Heart right ventricle (tissue), 16 donors: ENCODE measurements at regions of chr7 and their contacts with region 1.

Region 1: DNA sequence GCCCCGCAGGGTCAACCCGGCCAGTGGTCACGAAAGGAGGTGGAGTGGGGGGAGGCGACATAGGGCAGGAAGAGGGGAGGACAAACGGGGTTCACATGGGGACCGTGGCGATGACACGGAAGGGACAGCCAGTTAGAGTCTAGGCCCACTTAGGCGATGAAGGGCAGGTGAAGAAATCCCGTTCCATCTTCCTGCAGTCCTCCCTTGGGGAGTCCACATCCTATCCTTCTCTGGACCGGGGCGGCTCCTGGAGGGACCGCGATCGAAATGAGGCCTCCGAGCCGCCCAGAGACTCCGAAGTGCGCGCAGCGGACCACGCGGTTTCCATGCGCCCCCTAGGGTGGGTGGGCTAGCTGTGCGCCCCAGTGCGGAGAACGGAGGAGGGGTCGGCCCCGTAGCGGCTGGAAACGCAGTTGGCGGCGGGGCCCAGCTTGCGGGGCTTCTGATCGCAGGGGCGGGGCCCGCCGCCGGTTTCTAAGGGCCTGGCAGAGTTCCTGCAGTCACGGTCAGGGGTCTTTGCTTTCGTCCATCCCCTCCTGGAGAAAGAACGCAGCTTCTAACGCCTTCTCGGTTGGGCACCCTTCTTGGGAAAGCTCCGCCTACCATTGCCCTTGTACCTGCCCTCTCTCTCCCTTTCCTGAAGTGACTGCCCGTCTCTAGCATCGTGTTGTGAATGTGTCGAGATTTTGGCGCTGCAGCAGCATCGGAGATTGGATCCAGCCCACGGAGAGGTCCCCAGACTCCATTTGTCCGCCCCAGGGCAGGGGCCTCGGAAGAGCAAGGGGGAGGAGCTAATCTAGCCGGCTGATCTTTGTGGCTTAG is 17.9 kb upstream of the TMEM225B start:
- DNase-seq: peak; percentile 30 to 33
- ATAC-seq: peak; percentile 61 to 77 (median 69)
- H3K4me3 ChIP-seq: peak overlapping the region; percentile 40 to 91 (median 75)
- H3K27ac ChIP-seq: peak overlapping the region in 7 of 10 donors; percentile 15 to 71 (median 60)
- H3K4me1 ChIP-seq: peaks cover 0 to 26% (median 13%) of the 10 kb centered on the region in 9 donors
- H3K27me3 ChIP-seq: peaks cover 0 to 13% (median 4%) of the 10 kb centered on the region in 7 donors
- CTCF ChIP-seq: peak in 7 of 9 donors; percentile 34 to 56 (median 42)

Region 2: DNA sequence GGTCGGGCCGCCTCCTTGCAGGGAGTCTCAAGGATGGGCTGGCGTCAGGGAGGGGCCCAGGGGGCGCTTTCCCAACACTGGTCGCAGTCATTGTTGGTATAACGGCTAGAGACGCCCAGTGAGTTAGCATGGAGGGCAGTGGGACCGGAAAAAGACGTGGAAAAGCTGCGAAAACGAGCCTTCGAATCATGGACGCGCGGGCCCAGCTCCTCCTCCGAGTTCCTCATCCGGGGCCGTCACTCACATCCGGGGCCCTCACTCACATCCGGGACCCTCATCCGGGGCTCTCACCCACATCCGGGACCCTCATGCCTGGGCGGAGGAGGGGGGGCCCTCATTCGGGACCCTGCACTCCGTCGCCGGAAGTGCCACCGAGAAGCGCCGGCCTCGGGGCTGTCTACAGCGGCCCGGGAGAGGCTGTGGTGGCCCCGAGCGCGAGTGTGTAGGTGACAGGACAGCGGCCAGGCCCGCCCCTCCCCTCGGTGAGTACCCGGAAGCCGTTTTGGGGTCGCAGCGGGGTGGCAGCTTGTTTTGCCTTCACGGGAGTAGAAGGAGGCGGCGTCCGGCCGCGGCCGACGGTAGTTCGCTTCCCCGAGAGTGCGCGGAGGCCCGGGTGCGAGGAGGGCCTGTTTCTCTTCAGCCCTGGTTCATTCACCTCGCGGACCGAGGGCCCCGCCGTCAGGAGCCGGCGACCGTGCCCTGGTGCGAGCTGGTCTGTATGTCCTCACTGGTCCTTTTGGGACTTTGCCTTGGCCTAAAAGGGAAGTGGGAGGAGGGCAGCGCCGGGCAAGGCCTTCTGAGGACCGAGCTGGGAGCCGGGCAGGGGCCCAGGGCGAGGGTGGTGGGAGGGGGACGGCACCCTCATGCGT is 21.6 kb before region 1 on chr7 and contains the start of gene ZNF655:
- intact Hi-C with region 1: loop called in 1 of 10 experiments (anchors 1 kb)
- DNase-seq: peak; percentile 91 to 94
- ATAC-seq: peak; percentile 97 to 99 (median 97)
- H3K4me3 ChIP-seq: peak within 1 kb of the TSS; percentile 70 to 99 (median 86)
- H3K27ac ChIP-seq: peak within 1 kb of the TSS; percentile 77 to 99 (median 98)
- H3K4me1 ChIP-seq: peaks cover 4 to 57% (median 34%) of the 10 kb centered on the region in 9 donors
- H3K27me3 ChIP-seq: no peaks in the 10 kb centered on the region
- CTCF ChIP-seq: peak in 1 of 9 donors; percentile 21
- total RNA-seq, gene ZNF655: 27.2 to 37.6 (median 30.8) TPM

Region 3: DNA sequence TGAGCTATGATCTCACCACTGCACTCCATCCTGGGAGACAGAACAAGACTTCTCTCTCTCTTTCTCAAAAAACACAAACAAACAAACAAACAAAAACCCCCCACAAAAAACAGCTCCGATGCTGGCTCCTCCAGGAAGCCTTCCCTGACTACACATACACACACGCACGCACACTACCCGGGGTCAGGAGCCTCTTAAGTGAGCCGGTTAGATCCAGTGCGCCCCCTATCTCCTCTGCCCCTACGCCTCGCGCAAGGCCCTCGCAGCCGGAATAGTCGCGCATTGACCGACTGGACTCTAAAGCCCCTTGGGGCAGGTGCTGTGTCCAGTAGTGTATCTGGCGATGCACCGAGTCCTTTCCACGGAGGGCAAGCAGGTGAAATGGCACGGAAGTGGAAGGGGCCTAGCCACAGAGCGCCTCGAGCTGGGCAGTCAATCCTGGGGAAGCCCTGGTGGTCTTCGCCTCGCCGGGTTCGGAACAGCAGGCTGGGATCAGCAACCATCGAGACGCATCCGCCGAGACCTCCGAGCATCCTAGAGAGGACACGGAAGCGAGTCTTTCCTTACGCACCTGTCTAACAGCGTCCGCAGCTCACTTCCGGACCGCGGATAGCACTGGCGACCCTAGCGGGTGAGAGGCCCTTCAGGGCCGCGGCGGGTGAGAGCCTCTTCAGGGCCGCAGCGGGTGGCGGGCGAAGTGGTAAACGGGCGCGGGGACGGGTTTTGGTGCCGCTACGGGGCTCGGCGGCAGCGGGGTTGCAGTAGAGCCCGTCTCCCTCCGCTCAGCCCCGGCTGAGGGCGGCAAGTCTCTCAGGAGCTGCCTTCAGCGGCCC is 36.4 kb after region 1 on chr7 and contains the start of gene ZSCAN25:
- intact Hi-C with region 1: no loop called
- DNase-seq: peak; percentile 89 to 91
- ATAC-seq: peak; percentile 96 to 99 (median 98)
- H3K4me3 ChIP-seq: peak within 1 kb of the TSS; percentile 58 to 99 (median 86)
- H3K27ac ChIP-seq: peak within 1 kb of the TSS in 9 of 10 donors; percentile 70 to 92 (median 85)
- H3K4me1 ChIP-seq: peaks cover 5 to 20% (median 13%) of the 10 kb centered on the region in 9 donors
- H3K27me3 ChIP-seq: no peaks in the 10 kb centered on the region
- CTCF ChIP-seq: peak in 7 of 9 donors; percentile 22 to 55 (median 43)
- total RNA-seq, gene ZSCAN25: 6.1 to 10.5 (median 7.8) TPM